Left colon (tissue), 2 donors: ENCODE measurements at regions of chr11 and their contacts with region 1.

Region 1: GRCh38 chr11:61477727-61478148 is 30.8 kb upstream of the LRRC10B start:
- DNase-seq: peak in 1 of 2 donors; percentile 52
- ATAC-seq: peak; percentile 17

Region 2: DNA sequence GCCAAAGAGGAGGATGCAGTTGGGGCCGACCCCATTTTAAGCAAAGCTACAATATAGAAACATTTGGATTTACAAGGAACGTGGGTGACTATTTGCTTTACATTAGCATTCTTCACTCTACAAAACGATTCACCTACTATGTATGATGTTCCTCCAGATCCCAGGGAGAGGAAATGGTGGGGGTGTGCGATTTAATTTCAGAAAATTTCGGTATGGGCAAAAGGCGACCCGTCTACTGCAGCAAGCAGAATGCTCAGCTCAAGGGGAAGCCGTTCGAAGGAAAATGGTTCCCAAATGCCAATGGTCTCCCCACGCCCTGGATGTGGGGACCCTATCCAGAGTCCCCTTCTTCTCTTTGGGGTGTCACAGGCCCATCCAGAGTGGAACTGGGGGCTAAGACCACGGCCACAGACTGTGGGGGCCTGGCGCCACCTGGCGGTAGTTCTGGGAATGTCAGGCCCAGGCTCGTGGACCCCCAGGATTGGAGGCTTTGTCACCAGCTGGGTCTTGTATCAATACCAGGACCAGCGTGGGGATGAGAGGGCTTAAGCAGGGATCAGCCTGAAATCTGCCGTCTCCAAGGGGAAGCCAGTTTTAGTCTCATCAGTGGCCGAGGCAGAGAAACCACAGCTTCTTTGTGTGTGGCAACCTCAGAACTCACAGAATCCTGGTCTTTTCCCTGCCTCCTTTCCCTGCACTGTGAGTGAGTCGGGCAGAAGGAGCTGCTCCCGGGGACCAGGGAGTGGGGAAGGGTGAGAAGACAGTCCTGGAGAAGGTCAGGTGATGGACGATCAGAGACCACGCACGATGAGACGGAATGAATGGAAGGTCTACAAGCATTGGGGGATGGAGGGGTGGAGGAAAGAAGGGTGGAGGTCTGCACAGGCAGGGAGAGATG is 39.2 kb after region 1 on chr11:
- intact Hi-C with region 1: loop called in 1 of 2 experiments (anchors 2 kb)
- DNase-seq: peak in 1 of 2 donors; percentile 47
- ATAC-seq: no peak

Region 3: GRCh38 chr11:61639816-61640443 is 162.2 kb after region 1 on chr11:
- intact Hi-C with region 1: loop called in 1 of 2 experiments (anchors 10 kb)
- DNase-seq: no peak
- ATAC-seq: no peak

Region 4: DNA sequence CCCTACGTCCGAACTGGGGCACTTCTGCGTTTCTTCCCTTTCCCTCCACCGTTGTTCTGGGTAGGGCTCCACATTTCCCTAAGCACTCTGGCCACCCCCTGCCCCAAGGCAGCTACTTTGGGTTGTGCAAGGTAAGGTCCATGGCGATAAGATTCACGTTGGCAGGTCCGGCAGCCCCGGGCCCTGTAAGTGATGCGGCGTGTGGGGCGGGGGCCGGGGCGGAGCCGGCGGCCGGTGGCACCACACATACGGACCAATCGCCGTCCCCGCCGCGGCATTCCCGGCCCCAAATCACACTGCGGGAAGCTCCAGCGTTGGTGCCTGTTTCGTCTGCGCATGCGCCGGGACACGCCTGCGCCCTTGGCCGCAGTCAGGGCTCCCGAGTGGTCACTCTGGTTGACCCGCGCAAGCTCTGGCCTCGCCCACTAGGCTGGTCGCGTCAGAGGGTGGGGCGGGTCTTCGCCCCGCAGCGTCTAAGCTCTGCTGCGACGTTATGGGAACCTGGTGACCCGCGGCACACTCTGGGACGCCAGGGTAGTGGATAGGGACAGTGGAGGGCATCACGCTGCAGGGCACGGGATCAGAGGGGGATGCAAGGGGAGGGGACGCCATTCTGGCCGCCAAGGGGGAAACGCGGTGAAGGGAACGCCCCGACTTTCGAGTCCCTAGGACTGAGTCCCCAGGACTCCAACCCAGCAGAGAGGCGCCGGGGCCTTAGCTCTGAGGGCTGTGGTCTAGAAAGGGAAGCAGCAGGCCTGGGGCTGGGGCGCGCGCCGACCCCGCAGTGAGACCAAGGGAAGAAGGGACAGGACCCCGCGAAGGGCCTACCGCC is 337.4 kb after region 1 on chr11:
- intact Hi-C with region 1: no loop called
- DNase-seq: peak; percentile 89 to 93
- ATAC-seq: peak; percentile 82